RWPE1 (cell line): ENCODE measurements at regions of chr11 and their contacts with region 1.

Region 1: DNA sequence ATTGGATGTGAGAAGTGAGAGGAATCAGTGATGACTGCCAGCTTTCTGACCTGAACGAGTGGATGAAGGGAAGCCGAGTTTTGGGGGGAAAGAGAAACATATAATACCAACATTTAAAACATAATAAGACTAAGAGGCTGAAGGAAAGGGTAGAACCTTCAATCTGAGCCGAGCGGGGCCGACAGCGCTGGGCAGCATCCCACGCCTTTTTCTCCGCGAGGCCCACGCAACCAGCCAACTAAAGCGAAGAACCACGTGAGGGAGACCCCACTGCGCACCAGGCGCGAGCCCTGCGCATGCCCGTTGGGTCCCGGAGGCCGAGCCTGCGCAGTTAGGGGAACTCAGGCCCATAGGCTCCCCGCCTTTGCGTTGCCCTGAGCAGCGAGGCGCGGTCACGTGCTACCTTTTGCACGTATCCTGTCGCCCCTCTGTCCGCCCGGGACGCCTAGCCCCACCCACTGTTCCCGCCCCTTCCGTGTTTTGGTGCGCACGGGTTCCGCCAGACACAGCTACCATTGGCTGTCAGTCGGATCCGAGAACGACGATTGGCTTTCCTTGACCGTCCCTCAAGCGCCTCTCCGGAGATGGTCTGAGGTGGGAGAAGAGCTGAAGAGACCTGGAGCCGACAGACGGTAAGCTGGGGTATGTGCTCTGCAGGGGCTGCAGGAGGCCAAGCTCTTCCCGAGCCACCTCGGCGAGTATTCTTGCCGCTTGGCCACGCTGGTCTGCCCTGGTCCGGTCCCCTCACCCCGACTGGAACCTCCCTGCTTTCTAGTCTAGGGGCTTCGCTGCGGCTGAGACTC is at the start of gene HINFP:
- DNase-seq: peak; percentile 97
- H3K27ac ChIP-seq: peak within 1 kb of the TSS; percentile 82
- CTCF ChIP-seq: no peak

Region 2: DNA sequence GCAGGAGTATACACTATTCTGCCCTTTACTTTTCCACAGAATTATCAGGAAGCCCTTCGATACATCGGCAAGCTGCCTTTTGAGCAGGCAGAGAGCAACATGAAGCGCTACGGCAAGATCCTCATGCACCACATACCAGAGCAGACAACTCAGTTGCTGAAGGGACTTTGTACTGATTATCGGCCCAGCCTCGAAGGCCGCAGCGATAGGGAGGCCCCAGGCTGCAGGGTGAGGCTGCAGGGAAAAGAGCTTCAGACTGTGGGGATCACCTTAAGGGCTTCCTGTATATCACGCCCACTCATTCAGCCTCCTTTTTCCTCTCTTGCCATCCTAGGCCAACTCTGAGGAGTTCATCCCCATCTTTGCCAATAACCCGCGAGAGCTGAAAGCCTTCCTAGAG is 43.4 kb before region 1 on chr11:
- CTCF ChIA-PET with region 1: no interaction called
- POLR2A ChIA-PET with region 1: no interaction called
- DNase-seq: no peak
- H3K27ac ChIP-seq: peak overlapping the region; percentile 2; the same call in 1 of the 2 replicates
- CTCF ChIP-seq: no peak

Region 3: GRCh38 chr11:119095066-119095880 is 25.9 kb before region 1 on chr11:
- CTCF ChIA-PET with region 1: interaction called, 10 read pairs
- POLR2A ChIA-PET with region 1: no interaction called
- DNase-seq: peak; percentile 100
- H3K27ac ChIP-seq: peak overlapping the region; percentile 89
- CTCF ChIP-seq: peak; percentile 35; the same call in 1 of the 2 replicates